H1 (cell line): ENCODE measurements at regions of chr1 and their contacts with region 1.

Region 1: DNA sequence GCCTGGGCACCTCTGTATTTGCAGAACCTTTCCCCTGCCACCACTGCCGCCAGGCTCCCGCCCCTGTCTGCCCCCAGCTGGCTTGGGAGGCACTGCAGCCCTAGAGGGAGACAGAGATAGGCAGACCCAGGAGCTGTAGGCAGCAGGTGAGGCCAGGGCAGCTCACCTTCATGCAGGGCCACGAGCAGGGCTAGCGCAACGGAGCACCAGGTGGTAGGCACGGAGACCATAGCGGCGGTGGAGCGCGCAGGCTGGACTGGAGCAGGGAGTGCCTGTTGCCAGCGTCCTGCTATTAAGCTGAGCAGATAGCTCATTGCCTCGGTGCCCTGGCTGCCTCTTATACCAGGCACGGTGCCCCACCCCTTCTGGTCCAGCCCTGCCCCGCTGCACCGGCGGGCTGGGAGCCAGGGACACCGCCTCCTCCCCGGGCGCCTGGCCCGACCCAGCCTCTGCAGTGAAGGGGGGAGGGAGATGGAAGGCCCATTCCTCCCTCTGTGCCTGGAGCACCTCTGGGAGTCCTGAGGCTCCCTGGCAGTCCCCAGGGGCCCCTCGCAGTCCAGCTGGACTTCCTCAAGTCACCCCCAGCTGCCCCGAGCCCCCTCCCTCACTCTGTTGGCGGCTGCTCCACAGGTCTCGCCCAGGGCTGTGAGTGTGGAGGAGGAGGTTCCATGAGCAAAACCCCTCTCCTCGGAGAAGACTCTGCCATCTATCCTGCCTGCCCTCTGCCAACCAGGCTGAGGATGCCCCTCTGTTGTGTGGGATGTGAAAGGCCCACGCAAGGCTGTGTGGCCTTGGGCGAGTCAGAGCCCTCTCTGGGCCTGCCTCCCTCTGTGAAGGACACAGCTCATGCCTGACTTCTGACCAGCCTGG is at the start of gene EDN2:
- DNase-seq: no peak
- H3K4me3 ChIP-seq: no peak within 1 kb of the TSS
- H3K27ac ChIP-seq: no peak within 1 kb of the TSS
- H3K4me1 ChIP-seq: peaks cover 13 to 31% (median 24%) of the 10 kb centered on the region in 4 experiments
- H3K27me3 ChIP-seq: peaks cover 0 to 2% (median 0%) of the 10 kb centered on the region in 4 experiments; a peak in 2 of 7 replicates
- CTCF ChIP-seq: peak in 2 of 3 experiments; percentile 64 to 68; a peak in 3 of 4 replicates
- EP300 ChIP-seq: no peak
- POLR2A ChIP-seq: no peak
- RAD21 ChIP-seq: peak; percentile 31 to 45; a peak in 3 of 4 replicates
- total RNA-seq, gene EDN2: 0.39 TPM in 1 of 2 replicates, not detected in the other

Region 2: DNA sequence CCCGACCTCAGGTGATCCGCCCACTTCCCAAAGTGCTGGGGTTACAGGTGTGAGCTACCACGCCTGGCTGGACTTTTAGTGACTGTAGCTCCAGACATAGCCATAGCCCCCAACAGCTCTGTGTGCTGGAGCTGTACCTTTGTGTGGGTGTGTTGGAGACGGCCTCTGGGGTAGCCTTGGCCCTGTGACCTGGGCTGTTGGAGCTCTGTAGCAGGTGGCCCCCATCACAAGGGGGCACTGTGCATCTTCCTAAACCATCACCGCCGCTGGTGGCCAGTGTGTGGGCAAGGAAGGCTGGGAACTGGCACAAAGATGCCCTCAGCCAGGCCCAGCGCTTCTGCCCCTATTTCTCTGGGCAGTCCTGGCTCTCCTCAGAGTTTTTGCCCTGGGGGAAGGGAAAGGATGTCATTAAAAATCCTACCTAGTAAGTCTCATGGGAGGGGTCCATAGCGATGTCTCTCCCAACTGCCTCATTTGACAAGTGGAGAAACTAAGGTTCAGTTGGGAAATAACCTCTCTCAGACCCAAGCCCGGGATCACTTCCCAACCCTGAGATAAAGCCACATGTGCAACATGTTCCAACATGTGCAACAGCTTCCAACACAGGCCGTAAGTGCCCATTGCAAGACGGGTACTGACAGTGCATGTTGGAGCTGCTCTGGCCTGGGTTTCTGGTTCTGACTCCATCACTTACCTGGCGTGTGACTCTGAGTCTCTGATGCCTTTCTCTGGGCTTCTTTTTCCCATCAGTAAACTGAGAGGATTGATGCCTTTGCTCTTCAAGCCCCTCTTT is 161.6 kb before region 1 on chr1:
- CTCF ChIA-PET with region 1: interaction called, 13 read pairs
- POLR2A ChIA-PET with region 1: no interaction called
- DNase-seq: peak; percentile 36 to 80
- H3K4me3 ChIP-seq: no peak overlapping the region
- H3K27ac ChIP-seq: no peak overlapping the region
- H3K4me1 ChIP-seq: peaks cover 0 to 10% (median 6%) of the 10 kb centered on the region in 4 experiments; a peak in 6 of 7 replicates
- H3K27me3 ChIP-seq: no peaks in the 10 kb centered on the region; a peak in 1 of 7 replicates
- CTCF ChIP-seq: peak; percentile 87 to 93 (median 89)
- EP300 ChIP-seq: no peak
- POLR2A ChIP-seq: no peak
- RAD21 ChIP-seq: peak; percentile 94 to 96

Region 3: DNA sequence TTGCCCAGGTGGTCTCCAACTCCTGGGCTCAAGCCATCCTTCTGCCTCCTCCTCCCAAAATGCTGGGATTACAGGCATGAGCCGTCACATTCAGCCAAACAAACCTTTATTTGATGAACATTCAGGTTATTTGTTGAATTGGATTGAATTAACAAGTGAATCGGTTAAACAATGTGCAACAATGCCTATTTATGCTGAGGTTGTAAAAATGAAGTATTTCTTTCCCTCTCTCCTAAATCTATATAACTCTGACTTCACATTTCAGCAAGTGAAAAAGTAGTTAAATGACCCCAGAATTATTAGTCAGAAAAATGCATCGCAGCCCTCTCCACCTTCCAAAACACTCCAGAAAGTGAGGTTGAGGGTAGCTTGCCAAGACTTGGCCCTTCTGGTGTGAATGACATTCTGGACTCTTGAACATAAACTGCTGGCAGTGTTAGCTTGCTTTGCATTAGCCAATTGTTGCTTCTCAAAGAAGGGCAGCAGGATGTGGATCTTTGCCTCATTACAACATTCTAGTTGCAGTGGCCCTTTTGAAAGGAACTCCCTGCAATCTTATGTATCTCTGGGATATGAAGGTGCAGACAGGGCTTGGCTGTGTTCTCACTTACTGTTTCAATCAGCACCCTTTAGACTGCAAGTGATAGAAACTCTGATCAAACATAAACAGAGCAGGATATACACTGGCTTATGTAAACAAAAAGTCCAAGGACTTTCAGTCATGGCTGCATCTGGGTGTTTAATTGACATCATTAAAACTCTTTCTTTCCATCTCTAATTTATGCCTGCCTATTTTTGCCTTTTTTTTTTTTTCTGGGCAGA is 22.6 kb before region 1 on chr1:
- CTCF ChIA-PET with region 1: interaction called, 10 read pairs
- POLR2A ChIA-PET with region 1: interaction called, 3 read pairs
- DNase-seq: no peak
- H3K4me3 ChIP-seq: no peak overlapping the region
- H3K27ac ChIP-seq: no peak overlapping the region
- H3K4me1 ChIP-seq: no peaks in the 10 kb centered on the region
- H3K27me3 ChIP-seq: no peaks in the 10 kb centered on the region
- CTCF ChIP-seq: no peak
- EP300 ChIP-seq: no peak
- POLR2A ChIP-seq: no peak
- RAD21 ChIP-seq: no peak

Region 4: GRCh38 chr1:41496080-41497055 is 11.8 kb after region 1 on chr1:
- CTCF ChIA-PET with region 1: interaction called, 141 read pairs
- POLR2A ChIA-PET with region 1: interaction called, 21 read pairs
- DNase-seq: peak; percentile 69 to 88
- H3K4me3 ChIP-seq: peak overlapping the region; percentile 6 to 51 (median 24); a peak in 6 of 8 replicates
- H3K27ac ChIP-seq: peak overlapping the region; percentile 75; the same call in 1 of the 2 replicates
- H3K4me1 ChIP-seq: peaks cover 0 to 23% (median 17%) of the 10 kb centered on the region in 4 experiments; a peak in 6 of 7 replicates
- H3K27me3 ChIP-seq: peaks cover 0 to 13% (median 11%) of the 10 kb centered on the region in 4 experiments; a peak in 3 of 7 replicates
- CTCF ChIP-seq: 0 out of 4 replicates have a peak, but pooled peaks of 1 of the 3 experiments have one; percentile 5
- EP300 ChIP-seq: peak in 1 of 2 experiments; percentile 71; a peak in 1 of 3 replicates
- POLR2A ChIP-seq: no peak; a peak in 1 of 3 replicates
- RAD21 ChIP-seq: no peak